ENCODE measurements at regions of chr5 and their contacts with region 1.

Region 1: DNA sequence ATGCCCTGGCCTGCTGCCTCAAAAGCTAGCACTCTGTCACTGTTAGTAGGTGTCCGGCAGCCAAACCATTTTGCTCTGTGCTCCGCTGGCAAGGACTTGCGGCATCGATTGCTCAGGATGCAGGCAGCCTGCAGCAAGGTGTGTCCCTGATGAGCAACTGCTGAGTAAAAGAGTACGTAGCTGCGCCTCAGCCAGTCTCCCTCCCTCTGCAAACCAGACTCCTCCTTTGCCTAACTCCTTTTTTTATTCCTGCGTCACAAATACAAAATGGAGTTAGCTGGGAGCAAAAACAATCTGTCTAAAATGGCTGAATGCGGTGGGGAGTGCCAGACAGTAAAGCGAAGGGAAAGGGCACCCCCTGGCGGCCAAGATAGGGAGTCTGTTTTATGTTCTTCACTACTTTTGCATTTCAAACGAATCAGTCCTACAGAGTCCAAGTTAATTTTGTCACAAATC is 61.1 kb downstream of the DIAPH1 start:
- DNase-seq: peak; percentile 85
- ATAC-seq: peak; percentile 57
- H3K4me3 Mint-ChIP-seq: peak overlapping the region; percentile 61
- H3K27ac Mint-ChIP-seq: peak overlapping the region; percentile 97
- H3K4me1 Mint-ChIP-seq: peaks cover 38% of the 10 kb centered on the region
- H3K27me3 Mint-ChIP-seq: no peaks in the 10 kb centered on the region
- CTCF ChIP-seq: peak; percentile 92

Region 2: DNA sequence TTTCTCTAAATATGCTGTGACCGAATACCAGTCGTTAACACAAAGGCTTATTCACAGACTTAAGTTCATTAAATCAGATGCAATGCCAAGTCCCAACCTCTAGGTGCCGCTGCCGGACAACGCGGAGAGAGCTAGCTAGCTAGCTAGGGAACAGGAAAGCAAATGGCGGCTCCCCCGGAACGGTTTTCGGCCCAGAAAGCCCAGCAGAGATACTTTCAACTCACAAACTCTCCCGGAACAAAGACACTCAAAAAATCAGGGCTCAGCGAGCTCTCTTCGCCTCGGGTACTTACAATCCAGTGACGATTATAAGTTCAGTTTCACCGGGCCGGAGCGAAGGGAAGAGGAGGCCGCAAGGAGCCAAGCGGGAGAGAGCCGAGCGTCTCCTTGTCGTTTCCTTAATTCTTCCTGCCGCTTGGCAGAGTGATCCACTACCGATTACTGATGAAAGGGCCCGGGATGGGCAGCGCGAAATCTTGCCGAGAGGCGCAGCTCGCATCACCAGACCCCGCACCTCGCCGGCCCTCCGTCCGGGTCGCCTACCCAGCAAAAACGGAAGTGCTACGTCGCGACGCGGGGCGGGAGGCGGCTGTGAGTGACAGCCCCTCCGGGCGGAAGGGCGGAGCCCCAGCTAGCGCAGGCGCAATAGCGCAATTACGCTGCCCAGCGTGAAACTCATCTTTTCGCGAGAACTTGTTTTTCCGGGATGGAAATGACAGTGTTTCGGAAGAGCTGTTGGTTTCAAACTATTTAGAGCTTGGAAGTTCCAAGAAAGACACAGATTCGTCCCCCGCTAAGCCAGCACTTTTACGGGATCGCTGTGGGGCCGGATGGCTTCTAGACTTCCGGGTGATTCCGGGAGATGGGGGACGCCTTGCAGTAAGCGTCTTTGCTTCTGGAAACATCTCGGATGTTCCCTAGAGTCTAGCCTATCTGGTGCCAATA is 237.2 kb before region 1 on chr5 and contains the start of gene TAF7:
- CTCF ChIA-PET with region 1: interaction called, 10 read pairs
- POLR2A ChIA-PET with region 1: interaction called, 5 read pairs
- DNase-seq: peak; percentile 95
- ATAC-seq: peak; percentile 94
- H3K4me3 Mint-ChIP-seq: peak within 1 kb of the TSS; percentile 99
- H3K27ac Mint-ChIP-seq: peak within 1 kb of the TSS; percentile 99
- H3K4me1 Mint-ChIP-seq: peaks cover 24% of the 10 kb centered on the region
- H3K27me3 Mint-ChIP-seq: peaks cover 24% of the 10 kb centered on the region
- CTCF ChIP-seq: peak; percentile 85
- total RNA-seq, gene TAF7: 87.8 to 96.2 TPM (median 90.1 TPM) in 3 replicates

Region 3: GRCh38 chr5:141369994-141370848 is 187.5 kb before region 1 on chr5 and contains the start of gene PCDHGB3:
- CTCF ChIA-PET with region 1: interaction called, 15 read pairs
- POLR2A ChIA-PET with region 1: no interaction called
- DNase-seq: peak; percentile 56
- ATAC-seq: peak; percentile 95
- H3K4me3 Mint-ChIP-seq: peak within 1 kb of the TSS; percentile 61
- H3K27ac Mint-ChIP-seq: peak within 1 kb of the TSS; percentile 91
- H3K4me1 Mint-ChIP-seq: peaks cover 5% of the 10 kb centered on the region
- H3K27me3 Mint-ChIP-seq: peaks cover 8% of the 10 kb centered on the region
- CTCF ChIP-seq: no peak
- total RNA-seq, gene PCDHGB3: 3.3 to 4.2 TPM (median 3.5 TPM) in 3 replicates

Region 4: DNA sequence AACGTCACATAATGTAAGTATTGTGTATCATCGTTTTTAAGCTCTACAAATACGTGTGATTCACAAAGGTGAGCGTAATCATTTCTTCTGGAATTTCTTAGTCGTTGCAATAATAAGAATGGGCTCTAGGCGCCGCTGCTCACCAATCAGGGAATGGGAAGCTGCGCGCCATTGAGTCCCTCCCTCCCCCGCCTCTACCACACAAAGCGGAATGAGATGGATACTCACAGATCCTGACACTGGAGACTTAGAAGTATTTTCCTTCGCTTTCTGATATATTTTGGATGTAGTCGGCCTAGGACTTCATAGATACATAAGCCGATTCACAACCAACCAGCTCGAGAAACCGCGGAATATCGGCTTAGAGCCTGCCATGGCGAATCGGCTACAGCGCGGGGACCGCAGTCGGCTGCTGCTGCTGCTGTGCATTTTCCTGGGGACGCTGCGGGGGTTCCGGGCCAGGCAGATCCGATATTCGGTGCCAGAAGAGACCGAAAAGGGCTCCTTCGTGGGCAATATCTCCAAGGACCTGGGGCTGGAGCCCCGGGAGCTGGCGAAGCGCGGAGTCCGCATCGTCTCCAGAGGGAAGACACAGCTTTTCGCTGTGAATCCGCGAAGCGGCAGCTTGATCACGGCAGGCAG is 136.7 kb before region 1 on chr5 and contains the start of gene PCDHGA11:
- CTCF ChIA-PET with region 1: interaction called, 31 read pairs
- POLR2A ChIA-PET with region 1: interaction called, 3 read pairs
- DNase-seq: peak; percentile 77
- ATAC-seq: peak; percentile 52
- H3K4me3 Mint-ChIP-seq: peak within 1 kb of the TSS; percentile 81
- H3K27ac Mint-ChIP-seq: peak within 1 kb of the TSS; percentile 47
- H3K4me1 Mint-ChIP-seq: peaks cover 26% of the 10 kb centered on the region
- H3K27me3 Mint-ChIP-seq: peaks cover 14% of the 10 kb centered on the region
- CTCF ChIP-seq: peak; percentile 68
- total RNA-seq, gene PCDHGA11: 7.0 to 8.4 TPM (median 7.1 TPM) in 3 replicates

Region 5: DNA sequence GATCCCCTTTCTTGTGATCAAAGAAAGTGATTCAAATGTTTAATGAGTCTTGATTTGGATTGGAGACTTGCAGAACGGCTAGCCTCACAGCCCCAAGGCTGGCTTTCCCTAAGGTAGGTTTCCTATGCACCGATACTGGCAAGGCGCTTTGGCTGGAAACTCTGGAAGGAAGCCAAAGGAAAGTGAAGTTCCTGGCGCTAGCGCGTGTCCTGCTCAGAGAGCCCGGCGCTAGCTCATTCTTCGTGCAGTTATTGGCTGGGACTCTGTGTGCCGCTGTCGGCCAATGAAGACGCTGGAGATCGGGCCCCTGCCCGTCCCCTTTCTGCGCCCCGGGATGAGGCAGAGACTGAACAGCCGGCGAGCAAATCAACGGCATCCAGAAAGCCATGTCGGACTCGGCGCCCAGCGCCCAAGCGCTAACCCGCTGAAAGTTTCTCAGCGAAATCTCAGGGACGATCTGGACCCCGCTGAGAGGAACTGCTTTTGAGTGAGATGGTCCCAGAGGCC is 82.0 kb before region 1 on chr5 and contains the start of gene PCDHGC3:
- CTCF ChIA-PET with region 1: interaction called, 13 read pairs
- POLR2A ChIA-PET with region 1: no interaction called
- DNase-seq: peak; percentile 92
- ATAC-seq: peak; percentile 96
- H3K4me3 Mint-ChIP-seq: peak within 1 kb of the TSS; percentile 92
- H3K27ac Mint-ChIP-seq: peak within 1 kb of the TSS; percentile 93
- H3K4me1 Mint-ChIP-seq: peaks cover 35% of the 10 kb centered on the region
- H3K27me3 Mint-ChIP-seq: peaks cover 28% of the 10 kb centered on the region
- CTCF ChIP-seq: no peak
- total RNA-seq, gene PCDHGC3: 28.1 to 29.4 TPM (median 29.1 TPM) in 3 replicates

Region 6: GRCh38 chr5:141524604-141525597 is 32.8 kb before region 1 on chr5:
- CTCF ChIA-PET with region 1: interaction called, 31 read pairs
- POLR2A ChIA-PET with region 1: interaction called, 3 read pairs
- DNase-seq: peak; percentile 93
- ATAC-seq: peak; percentile 98
- H3K4me3 Mint-ChIP-seq: no peak overlapping the region
- H3K27ac Mint-ChIP-seq: peak overlapping the region; percentile 87
- H3K4me1 Mint-ChIP-seq: peaks cover 23% of the 10 kb centered on the region
- H3K27me3 Mint-ChIP-seq: no peaks in the 10 kb centered on the region
- CTCF ChIP-seq: peak; percentile 97

Region 7: DNA sequence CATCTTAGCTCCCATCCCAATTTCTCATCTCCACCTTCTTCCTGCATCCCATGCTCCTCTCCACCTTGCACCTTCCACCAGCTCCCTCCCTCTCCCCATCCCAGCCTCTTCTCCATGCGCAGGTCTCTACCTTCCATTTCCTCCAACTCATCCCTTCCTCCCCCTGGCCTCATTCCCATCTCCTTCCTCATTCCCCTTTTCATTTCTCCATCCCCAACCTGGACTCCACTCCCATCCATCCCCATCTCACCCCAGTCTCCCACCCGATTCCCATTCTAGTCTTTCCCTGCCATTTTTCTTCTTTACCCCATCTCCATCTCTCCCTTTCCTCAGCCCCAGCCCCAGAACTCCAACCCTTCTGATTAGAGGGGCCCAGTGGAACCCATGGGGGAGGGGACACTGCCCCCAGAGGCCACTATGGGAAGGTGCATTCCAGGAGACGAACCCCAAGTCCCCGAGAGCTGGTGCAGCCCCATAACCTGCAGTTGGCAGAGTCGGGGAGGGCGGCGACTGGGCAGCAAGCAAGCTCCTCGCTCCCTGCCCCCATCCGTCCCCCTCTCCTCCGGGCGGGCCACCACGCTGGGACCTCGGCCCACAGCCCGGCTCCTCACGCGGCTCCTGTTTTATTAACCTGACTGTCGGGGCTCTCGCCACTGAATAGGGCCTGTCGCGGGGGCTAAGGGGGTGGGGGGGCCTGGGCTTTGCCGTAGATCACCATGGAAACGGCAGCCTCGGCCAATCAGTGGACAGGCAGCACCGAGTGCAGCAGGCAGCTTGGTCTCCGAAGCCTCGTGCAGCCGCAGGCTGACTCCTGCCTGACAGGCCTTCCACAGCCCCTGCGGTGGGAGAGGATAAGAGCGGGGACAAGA is 253.8 kb after region 1 on chr5:
- CTCF ChIA-PET with region 1: no interaction called
- POLR2A ChIA-PET with region 1: no interaction called
- DNase-seq: peak; percentile 80
- ATAC-seq: peak; percentile 62
- H3K4me3 Mint-ChIP-seq: peak overlapping the region; percentile 61
- H3K27ac Mint-ChIP-seq: peak overlapping the region; percentile 61; the same call in 1 of the 2 replicates
- H3K4me1 Mint-ChIP-seq: peaks cover 85% of the 10 kb centered on the region
- H3K27me3 Mint-ChIP-seq: peaks cover 2% of the 10 kb centered on the region; the same call in 1 of the 2 replicates
- CTCF ChIP-seq: peak; percentile 67

Measured in WTC11 (cell line).